Heart left ventricle (tissue), 16 donors: ENCODE measurements at regions of chr21 and their contacts with region 1.

Region 1: DNA sequence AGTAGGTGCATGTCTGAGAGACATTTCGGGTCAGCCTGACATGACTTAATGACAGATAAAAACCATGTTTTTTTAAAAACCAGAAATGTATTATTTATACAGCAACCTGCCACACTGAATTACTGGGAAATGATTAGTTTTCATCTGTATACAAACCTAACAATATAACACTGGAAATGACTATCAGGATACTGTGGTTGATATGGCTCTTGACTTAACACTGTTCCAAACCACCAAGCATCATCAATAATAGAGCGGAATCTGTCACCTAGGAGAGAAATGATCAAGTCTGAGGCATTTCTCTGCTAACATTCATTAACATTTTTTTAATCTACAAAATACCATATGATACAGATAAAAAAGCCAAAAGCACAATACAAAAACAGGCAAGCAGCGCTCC is 41.7 kb upstream of the PSMG1 start:
- DNase-seq: no peak
- ATAC-seq: no peak
- H3K4me3 ChIP-seq: no peak overlapping the region
- H3K27ac ChIP-seq: no peak overlapping the region
- H3K4me1 ChIP-seq: peaks cover 0 to 5% (median 0%) of the 10 kb centered on the region in 12 donors
- H3K27me3 ChIP-seq: no peaks in the 10 kb centered on the region
- CTCF ChIP-seq: no peak
- POLR2A ChIP-seq: no peak

Region 2: GRCh38 chr21:39263372-39263771 is 38.4 kb after region 1 on chr21:
- intact Hi-C with region 1: loop called in 1 of 10 experiments (anchors 5 kb)
- DNase-seq: no peak
- ATAC-seq: no peak
- H3K4me3 ChIP-seq: no peak overlapping the region
- H3K27ac ChIP-seq: no peak overlapping the region
- H3K4me1 ChIP-seq: no peaks in the 10 kb centered on the region
- H3K27me3 ChIP-seq: no peaks in the 10 kb centered on the region
- CTCF ChIP-seq: no peak
- POLR2A ChIP-seq: no peak